ENCODE measurements at regions of chr6 and their contacts with region 1.

Region 1: DNA sequence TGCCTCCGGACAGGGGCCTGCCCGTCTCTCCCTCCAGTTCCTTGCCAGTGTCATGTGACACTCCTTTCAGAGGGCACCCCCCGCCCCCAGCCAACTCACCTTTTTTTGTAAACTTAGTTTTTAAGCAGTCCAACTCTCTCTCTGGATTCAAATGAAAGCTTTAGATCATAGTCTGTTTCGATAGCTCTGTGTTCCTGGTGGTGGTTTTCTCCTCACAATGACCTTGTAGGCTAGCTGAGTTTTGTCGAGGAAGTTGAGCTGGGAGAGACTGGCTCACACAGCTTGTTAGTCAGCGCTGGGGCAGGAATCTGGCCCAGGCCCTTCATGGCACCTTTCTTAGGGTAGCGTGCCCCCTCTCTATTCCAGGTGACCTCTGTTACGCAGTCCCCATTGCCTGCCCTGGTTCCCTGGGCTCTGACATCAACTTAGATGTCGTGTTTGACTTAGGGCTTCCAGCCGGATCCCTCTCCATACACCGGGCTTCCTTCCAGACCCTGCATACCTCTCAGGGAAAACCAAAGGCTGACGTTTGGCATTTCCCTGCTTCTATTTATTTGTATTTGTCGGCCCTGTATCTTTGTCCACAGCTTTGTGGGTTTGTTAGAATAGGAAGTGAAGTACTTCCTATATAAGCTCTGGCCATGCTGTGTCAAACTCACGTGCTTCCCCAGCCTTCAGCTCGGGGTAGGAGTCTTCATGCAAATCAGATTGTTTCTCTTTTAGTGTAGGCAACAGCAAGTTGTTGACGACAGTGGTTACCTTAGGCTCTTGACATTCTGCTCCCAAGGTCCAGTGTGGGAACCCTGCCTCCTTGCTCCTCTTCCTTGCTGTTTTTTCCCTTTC is 12.7 kb downstream of the IGF2R start:
- DNase-seq: peak; percentile 43 to 62 (median 56)
- ATAC-seq: peak; percentile 65
- H3K4me3 ChIP-seq: no peak overlapping the region
- H3K27ac ChIP-seq: peak overlapping the region; percentile 73 to 88 (median 80)
- H3K4me1 ChIP-seq: peaks cover 92% of the 10 kb centered on the region
- H3K27me3 ChIP-seq: no peaks in the 10 kb centered on the region
- CTCF ChIP-seq: no peak
- POLR2A ChIP-seq: peak in 2 of 3 donors; percentile 26 to 27

Region 2: DNA sequence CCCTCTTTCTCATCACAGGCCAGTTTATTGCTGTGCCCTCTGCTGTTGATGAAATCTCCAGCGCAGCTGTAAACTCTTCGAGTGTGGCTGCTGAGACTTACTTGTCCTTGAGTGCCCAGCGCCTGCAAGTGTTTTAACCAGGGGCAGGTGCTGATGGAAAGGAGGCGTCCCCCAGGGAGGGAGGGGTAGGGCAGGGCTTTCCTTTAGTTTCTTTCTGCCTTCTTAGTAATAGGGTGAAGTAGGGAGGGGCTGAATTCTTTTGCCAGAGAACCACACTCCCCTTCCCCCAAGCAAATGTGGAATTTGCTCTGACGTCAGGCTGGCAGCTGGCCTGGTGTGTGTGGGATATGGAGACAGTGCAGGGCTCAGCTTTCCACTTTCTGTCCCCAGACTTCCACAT is 48.5 kb after region 1 on chr6:
- intact Hi-C with region 1: loop called (anchors 10 kb)
- DNase-seq: peak; percentile 75 to 86 (median 86)
- ATAC-seq: peak; percentile 91
- H3K4me3 ChIP-seq: no peak overlapping the region
- H3K27ac ChIP-seq: peak overlapping the region; percentile 17 to 72 (median 70)
- H3K4me1 ChIP-seq: peaks cover 31% of the 10 kb centered on the region
- H3K27me3 ChIP-seq: no peaks in the 10 kb centered on the region
- CTCF ChIP-seq: no peak
- POLR2A ChIP-seq: peak in 1 of 3 donors; percentile 27